Posterior vena cava (tissue), 2 donors: ENCODE measurements at regions of chr1 and their contacts with region 1.

Region 1: GRCh38 chr1:20717452-20718342 is at the start of gene KIF17:
- DNase-seq: peak; percentile 92
- total RNA-seq, gene KIF17: 2.9 to 3.2 TPM

Region 2: GRCh38 chr1:19139711-19140110 is 1578.0 kb before region 1 on chr1:
- intact Hi-C with region 1: no loop called
- DNase-seq: no peak

Region 3: DNA sequence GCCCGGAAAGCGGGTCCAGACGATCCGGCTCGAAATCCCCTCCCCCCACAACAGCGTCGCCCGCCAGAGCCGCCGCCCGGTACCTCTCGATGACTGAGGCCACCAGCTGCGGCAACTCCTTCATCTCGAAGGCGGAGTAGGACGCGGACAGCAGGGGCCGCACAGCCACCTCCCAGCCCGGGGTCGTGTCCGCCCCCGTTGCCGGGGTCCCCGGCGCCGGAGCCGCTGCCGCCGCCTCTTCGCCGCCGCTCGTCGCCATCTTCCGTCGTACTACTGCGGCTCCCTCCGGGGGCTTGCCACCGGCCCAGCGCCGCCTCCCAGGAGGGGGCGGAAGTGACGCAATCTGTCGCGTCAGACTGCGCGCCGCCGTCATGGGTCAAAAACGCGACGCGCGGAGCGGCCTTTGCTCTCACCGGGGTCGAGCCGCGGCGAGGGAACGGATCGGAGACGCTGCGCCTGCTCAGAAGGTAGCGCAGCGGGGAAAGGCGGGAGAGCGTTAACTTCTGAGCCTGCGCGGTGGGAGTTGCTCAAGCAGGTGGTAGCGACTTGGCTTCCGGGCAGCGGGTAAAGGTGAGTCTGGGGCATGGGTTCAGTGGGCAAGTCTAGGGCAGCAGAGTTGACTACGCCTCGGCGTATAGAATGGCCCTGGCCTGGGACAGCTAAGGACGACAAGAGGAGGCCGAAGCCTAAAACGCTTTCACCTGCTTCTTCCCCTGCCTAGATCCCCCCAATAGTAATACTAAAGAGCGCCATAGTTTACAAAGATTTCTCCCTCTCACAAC is 1507.5 kb before region 1 on chr1 and contains the start of gene UBR4:
- intact Hi-C with region 1: loop called in 1 of 2 experiments (anchors 5 kb)
- DNase-seq: peak; percentile 98
- total RNA-seq, gene UBR4: 111 to 120 TPM

Region 4: GRCh38 chr1:20625176-20626097 is 92.3 kb before region 1 on chr1:
- intact Hi-C with region 1: no loop called
- DNase-seq: no peak

Region 5: DNA sequence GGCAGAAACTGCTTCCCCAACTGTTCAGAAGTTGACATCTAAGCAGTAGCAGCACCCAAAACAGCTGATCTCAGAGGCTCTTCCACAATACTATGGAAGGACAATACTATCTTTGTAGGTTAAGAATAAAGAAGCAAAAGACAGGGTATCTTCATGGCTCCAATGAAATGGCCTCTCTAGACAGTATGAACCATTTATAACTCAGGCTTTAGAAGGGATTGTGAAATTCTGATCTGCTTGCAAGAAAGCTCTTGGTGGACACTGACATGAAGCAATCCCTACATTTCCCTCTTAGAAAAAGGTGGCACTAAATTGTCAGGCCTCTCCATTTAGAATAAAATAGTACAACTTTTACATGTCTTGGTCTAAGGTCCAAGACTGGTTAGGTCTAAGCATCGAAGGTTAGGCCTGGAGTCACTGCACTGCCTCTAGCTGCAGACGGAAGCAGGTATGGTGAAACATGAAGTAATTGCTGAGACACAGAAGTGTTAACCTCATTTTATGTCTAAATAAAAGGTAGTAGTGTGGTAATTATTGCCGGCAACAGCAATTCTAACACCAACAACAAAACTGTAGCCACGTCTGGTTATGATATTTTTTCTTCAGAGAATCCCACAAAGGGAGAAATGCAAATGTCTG is 120.0 kb after region 1 on chr1:
- intact Hi-C with region 1: no loop called
- DNase-seq: no peak